ENCODE measurements at regions of chr10 and their contacts with region 1.

Region 1: DNA sequence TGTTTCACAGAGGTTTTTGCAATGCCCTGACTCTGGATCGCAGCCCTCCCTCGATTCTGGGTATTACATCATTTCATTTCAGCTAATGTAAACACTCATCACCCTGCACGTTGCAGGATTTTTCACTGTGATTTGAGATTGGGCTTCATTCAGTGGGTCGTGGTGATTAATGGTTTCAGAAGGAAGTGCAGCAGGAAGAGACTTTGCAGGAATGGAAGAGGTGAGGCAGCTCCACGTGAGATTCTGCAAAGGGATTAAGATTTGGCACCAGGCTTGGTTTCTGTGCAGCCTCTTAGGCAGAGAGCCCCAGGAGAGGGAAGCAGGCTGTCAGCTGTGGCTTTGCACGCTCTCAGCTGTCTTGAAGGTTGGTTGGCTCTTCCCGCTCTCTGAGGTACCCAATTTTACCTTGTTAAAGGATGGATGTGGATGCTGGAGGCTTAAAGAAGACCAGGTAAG is 95.2 kb downstream of the PLCE1 start:
- DNase-seq: peak; percentile 70
- ATAC-seq: peak; percentile 80
- H3K4me3 ChIP-seq: no peak overlapping the region
- H3K27ac ChIP-seq: no peak overlapping the region
- H3K4me1 ChIP-seq: peaks cover 8% of the 10 kb centered on the region
- H3K27me3 ChIP-seq: no peaks in the 10 kb centered on the region
- CTCF ChIP-seq: no peak
- POLR2A ChIP-seq: no peak
- RAD21 ChIP-seq: no peak

Region 2: GRCh38 chr10:94129393-94130130 is 40.6 kb after region 1 on chr10:
- CTCF ChIA-PET with region 1: no interaction called
- POLR2A ChIA-PET with region 1: no interaction called
- dilution Hi-C with region 1: no loop called
- in situ Hi-C with region 1: no loop called
- intact Hi-C with region 1: loop called (anchors 5 kb)
- DNase-seq: peak; percentile 91
- ATAC-seq: peak; percentile 40
- H3K4me3 ChIP-seq: no peak overlapping the region
- H3K27ac ChIP-seq: no peak overlapping the region
- H3K4me1 ChIP-seq: peaks cover 24% of the 10 kb centered on the region
- H3K27me3 ChIP-seq: no peaks in the 10 kb centered on the region
- CTCF ChIP-seq: no peak
- POLR2A ChIP-seq: no peak
- RAD21 ChIP-seq: no peak

Measured in IMR-90 (cell line).